ENCODE measurements at regions of chr17 and their contacts with region 1.

Region 1: DNA sequence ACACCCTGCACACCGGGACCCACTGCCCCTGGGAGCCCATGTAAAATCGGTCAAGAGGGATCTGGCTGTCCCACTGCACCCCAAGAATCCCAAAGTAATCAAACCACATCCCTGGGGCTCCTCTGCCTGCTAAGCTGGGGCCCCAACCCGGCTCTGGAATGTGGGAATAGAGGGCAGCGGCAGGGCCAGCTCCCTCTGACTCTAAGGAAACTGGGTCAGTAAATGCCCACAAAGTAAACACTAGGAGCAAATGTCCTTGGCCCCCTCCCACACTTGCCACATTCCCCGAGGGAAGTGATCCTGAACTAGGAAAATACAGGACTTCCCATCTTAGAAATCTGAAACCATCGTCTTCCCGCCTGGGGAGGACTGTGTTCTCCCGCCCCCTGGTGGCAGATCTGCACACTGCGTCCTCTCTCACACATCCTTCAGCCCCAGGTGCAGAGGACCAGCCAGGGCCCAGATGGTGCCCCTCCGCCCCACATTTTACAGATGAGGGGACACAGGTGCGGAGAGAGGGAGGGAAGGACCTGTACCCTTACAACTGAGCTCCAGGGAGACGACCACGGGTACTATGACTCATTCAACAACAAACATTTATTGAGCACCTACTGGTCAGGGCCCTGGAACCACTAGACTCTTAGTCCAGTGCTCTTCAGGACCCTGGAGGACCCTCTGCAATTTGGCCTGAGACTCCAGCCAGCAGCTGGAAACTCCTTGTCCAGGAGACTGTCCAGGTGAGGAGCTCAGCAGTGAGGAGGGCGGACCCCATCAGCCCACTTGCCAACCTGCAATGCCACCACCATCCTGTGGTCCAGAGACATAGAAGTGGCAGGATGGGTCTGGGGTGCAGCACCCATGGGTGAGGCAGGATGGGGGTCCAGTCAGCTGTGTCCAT is 10.1 kb downstream of the P3H4 start:
- DNase-seq: peak; percentile 84 to 87
- H3K4me3 ChIP-seq: peak overlapping the region; percentile 35; the same call in 1 of the 2 replicates
- H3K27ac ChIP-seq: peak overlapping the region; percentile 86
- H3K4me1 ChIP-seq: peaks cover 24% of the 10 kb centered on the region
- H3K27me3 ChIP-seq: no peaks in the 10 kb centered on the region
- CTCF ChIP-seq: peak; percentile 98

Region 2: DNA sequence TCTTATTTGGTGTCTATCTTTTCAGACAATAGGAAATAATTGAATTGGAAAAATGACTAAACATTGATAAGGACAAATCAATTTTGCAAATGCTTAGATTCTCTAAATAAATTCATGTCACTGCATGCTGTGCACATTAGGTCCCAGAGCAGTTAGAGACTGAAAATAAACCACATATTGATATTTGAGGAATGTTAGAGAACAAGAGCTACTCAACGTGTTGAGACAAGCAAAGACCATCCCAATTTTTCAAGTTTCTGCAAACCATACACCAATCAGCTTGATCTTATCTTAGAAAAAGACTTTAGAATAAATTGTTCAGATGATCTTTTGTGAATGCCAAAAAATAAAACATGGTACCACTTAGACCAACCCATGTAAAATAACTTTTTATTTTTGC is 510.3 kb before region 1 on chr17:
- CTCF ChIA-PET with region 1: no interaction called
- POLR2A ChIA-PET with region 1: no interaction called
- intact Hi-C with region 1: no loop called
- DNase-seq: no peak
- H3K4me3 ChIP-seq: no peak overlapping the region
- H3K27ac ChIP-seq: no peak overlapping the region
- H3K4me1 ChIP-seq: no peaks in the 10 kb centered on the region
- H3K27me3 ChIP-seq: no peaks in the 10 kb centered on the region
- CTCF ChIP-seq: no peak

Region 3: GRCh38 chr17:41772218-41772585 is 29.4 kb before region 1 on chr17:
- CTCF ChIA-PET with region 1: interaction called, 9 read pairs
- POLR2A ChIA-PET with region 1: interaction called, 5 read pairs
- intact Hi-C with region 1: loop called (anchors 1 kb)
- DNase-seq: peak; percentile 87 to 88
- H3K4me3 ChIP-seq: peak overlapping the region; percentile 23; the same call in 1 of the 2 replicates
- H3K27ac ChIP-seq: peak overlapping the region; percentile 93
- H3K4me1 ChIP-seq: peaks cover 49% of the 10 kb centered on the region
- H3K27me3 ChIP-seq: no peaks in the 10 kb centered on the region
- CTCF ChIP-seq: no peak

Region 4: DNA sequence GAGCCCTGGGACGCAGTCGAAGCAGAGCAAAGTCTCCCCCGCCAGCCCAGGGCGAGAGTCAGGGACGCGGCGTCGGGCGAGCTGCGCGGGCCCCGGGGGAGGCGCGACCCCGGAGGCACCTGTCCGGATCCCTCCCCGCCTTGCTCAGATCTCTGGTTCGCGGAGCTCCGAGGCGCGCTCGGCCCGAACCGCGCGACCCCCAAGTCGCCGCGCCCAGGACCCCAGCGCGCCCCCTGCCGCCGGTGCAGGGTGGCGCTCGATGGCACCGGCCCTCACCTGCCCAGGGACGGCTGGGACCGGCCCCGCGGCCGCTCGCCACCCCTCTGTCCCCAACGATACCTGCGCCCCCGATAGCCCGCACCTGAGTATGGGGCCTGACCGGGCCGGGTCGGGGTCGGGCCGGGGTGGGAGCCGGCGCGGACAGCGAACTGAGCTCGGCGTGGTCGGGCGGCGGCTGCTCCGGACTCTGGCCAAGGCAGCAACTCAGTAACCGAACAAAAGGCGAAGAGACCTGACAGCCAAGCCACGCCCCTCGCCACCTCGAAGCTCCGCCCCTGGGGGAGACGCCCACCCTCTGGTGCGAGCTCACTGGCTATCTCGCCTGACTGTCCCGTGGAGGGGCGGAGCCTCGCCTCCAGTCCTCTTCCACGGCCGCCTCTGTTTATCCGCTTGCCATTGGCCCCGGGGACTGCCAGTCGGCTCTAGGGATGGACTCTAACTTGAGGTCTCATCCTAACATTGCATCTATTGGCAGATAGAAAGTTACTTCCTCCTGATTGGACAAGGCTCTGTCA is 15.2 kb before region 1 on chr17 and contains the start of gene JUP:
- CTCF ChIA-PET with region 1: interaction called, 29 read pairs
- POLR2A ChIA-PET with region 1: interaction called, 81 read pairs
- intact Hi-C with region 1: loop called (anchors 1 kb)
- DNase-seq: peak; percentile 100
- H3K4me3 ChIP-seq: peak within 1 kb of the TSS; percentile 63
- H3K27ac ChIP-seq: peak within 1 kb of the TSS; percentile 98
- H3K4me1 ChIP-seq: peaks cover 39% of the 10 kb centered on the region
- H3K27me3 ChIP-seq: no peaks in the 10 kb centered on the region
- CTCF ChIP-seq: peak; percentile 77
- total RNA-seq, gene JUP: 259 TPM in 2 replicates

Measured in PC-9 (cell line).